IMR-90 (cell line): ENCODE measurements at regions of chr7 and their contacts with region 1.

Region 1: DNA sequence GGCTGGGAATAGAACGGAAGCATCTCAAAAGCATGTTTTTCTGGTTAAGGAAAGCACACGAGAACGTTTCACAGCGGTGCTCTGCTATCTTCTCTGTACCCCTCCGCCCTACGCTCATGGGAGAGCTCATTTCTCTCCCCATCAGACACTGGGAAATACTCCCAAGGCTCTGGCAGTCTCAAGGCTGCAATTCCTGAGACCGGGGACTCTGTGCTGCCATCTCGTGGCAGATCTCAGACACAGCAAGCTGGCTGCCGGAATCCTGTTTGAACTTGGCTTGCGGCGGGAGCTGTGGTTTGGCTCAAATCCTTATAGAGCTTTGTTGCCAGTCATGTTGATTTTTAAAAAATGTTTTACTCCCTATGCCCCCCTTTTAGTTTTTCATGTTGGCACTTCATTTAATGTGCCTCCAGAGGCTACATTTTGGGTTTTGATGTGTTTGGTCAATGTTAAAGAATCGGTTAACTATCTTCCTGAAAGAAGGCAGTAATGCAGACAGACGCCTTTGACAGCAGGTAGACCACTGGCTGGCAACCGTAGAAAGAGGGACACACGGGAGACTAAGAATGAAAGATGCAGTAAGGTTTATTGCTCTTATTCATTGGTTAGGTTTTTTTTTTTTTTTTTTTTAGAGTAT is 27.6 kb downstream of the BMPER start:
- DNase-seq: peak; percentile 83
- ATAC-seq: peak; percentile 87
- H3K4me3 ChIP-seq: no peak overlapping the region
- H3K27ac ChIP-seq: no peak overlapping the region
- H3K4me1 ChIP-seq: peaks cover 11% of the 10 kb centered on the region
- H3K27me3 ChIP-seq: no peaks in the 10 kb centered on the region
- CTCF ChIP-seq: peak; percentile 93
- POLR2A ChIP-seq: no peak
- RAD21 ChIP-seq: peak; percentile 88

Region 2: DNA sequence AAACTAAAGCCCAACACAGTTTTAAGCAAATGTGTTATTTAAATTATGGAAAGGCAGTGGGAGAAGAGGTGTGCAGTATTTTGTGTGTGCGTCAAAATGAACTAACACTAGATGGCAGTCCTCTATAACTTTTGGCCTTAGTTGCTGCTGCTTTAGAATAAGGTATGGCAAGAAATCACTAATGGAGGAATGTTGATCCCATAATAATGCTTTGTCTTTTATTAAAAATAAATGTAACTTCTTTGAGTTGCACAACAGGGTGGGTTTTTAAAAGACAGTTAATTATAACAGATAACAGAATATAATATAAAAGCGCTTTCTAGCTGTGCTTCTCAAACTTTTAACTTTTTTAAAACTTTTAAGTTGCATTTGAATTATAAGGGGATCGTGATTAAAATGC is 747.2 kb before region 1 on chr7:
- CTCF ChIA-PET with region 1: interaction called, 3 read pairs
- POLR2A ChIA-PET with region 1: no interaction called
- dilution Hi-C with region 1: no loop called
- in situ Hi-C with region 1: no loop called
- intact Hi-C with region 1: loop called (anchors 2 kb)
- DNase-seq: peak; percentile 68
- ATAC-seq: peak; percentile 97
- H3K4me3 ChIP-seq: no peak overlapping the region
- H3K27ac ChIP-seq: no peak overlapping the region
- H3K4me1 ChIP-seq: no peaks in the 10 kb centered on the region
- H3K27me3 ChIP-seq: no peaks in the 10 kb centered on the region
- CTCF ChIP-seq: peak; percentile 80
- POLR2A ChIP-seq: no peak
- RAD21 ChIP-seq: peak; percentile 85

Region 3: DNA sequence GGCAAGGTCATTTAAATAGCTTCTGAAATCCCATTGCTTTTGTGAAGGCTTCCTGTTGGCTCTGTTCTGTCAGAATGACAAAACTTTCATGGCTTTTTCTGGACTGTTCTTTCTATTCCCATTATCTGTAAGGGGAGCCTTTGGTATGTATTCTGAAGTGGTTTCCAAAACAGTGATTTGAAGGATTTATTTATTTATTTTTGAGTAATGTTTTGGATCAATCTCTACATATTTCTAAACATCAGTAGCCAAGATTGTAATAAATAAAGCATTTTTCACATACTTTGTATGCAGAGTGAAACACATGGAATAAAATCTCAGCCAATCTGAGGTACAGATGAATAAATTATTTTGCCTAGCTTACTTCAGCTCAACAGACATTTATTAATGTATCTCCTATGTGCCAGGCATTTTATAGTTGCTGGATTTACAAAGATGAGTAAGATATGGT is 682.5 kb before region 1 on chr7:
- CTCF ChIA-PET with region 1: interaction called, 4 read pairs
- POLR2A ChIA-PET with region 1: no interaction called
- dilution Hi-C with region 1: no loop called
- in situ Hi-C with region 1: loop called (anchors 10 kb)
- intact Hi-C with region 1: no loop called
- DNase-seq: peak; percentile 75
- ATAC-seq: peak; percentile 81
- H3K4me3 ChIP-seq: no peak overlapping the region
- H3K27ac ChIP-seq: no peak overlapping the region
- H3K4me1 ChIP-seq: peaks cover 3% of the 10 kb centered on the region; the same call in 1 of the 2 replicates
- H3K27me3 ChIP-seq: no peaks in the 10 kb centered on the region
- CTCF ChIP-seq: no peak
- POLR2A ChIP-seq: no peak
- RAD21 ChIP-seq: no peak

Region 4: GRCh38 chr7:33459340-33459751 is 473.6 kb before region 1 on chr7:
- CTCF ChIA-PET with region 1: interaction called, 3 read pairs
- POLR2A ChIA-PET with region 1: no interaction called
- dilution Hi-C with region 1: no loop called
- in situ Hi-C with region 1: no loop called
- intact Hi-C with region 1: loop called (anchors 1 kb)
- DNase-seq: peak; percentile 66
- ATAC-seq: peak; percentile 99
- H3K4me3 ChIP-seq: no peak overlapping the region
- H3K27ac ChIP-seq: no peak overlapping the region
- H3K4me1 ChIP-seq: no peaks in the 10 kb centered on the region
- H3K27me3 ChIP-seq: no peaks in the 10 kb centered on the region
- CTCF ChIP-seq: peak; percentile 54
- POLR2A ChIP-seq: no peak
- RAD21 ChIP-seq: peak; percentile 64

Region 5: DNA sequence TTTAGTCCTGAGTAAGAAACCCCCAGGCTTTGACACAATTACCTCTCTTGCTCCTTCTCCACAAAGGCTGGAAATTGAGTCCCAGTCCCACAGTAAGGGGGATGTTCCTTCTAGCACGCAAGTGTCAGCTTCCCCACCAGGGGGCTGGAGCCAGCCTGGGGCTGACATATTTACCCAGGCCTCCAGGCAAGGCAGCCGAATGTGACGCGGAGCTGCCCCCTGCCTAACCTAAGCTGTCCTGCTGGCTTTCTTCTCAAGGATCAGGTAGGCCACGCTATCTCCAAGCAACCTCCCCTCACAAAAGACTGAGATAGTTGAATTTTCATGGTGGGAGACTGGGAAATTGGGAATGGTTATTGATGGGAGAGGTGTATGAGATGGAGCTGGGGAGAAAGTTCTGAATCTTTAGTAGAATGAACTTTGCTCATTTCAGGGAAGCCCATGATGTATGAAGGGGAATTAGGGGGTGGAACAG is 46.8 kb before region 1 on chr7:
- CTCF ChIA-PET with region 1: no interaction called
- POLR2A ChIA-PET with region 1: no interaction called
- dilution Hi-C with region 1: no loop called
- in situ Hi-C with region 1: no loop called
- intact Hi-C with region 1: no loop called
- DNase-seq: peak; percentile 35
- ATAC-seq: peak; percentile 53
- H3K4me3 ChIP-seq: no peak overlapping the region
- H3K27ac ChIP-seq: peak overlapping the region; percentile 30; the same call in 1 of the 2 replicates
- H3K4me1 ChIP-seq: peaks cover 11% of the 10 kb centered on the region
- H3K27me3 ChIP-seq: peaks cover 8% of the 10 kb centered on the region
- CTCF ChIP-seq: peak; percentile 52
- POLR2A ChIP-seq: no peak
- RAD21 ChIP-seq: peak; percentile 50

Region 6: GRCh38 chr7:33921216-33921938 is 11.6 kb before region 1 on chr7:
- CTCF ChIA-PET with region 1: interaction called, 20 read pairs
- POLR2A ChIA-PET with region 1: no interaction called
- dilution Hi-C with region 1: no loop called
- in situ Hi-C with region 1: no loop called
- intact Hi-C with region 1: no loop called
- DNase-seq: peak; percentile 79
- ATAC-seq: peak; percentile 44
- H3K4me3 ChIP-seq: no peak overlapping the region
- H3K27ac ChIP-seq: no peak overlapping the region
- H3K4me1 ChIP-seq: peaks cover 3% of the 10 kb centered on the region
- H3K27me3 ChIP-seq: no peaks in the 10 kb centered on the region
- CTCF ChIP-seq: no peak
- POLR2A ChIP-seq: no peak
- RAD21 ChIP-seq: no peak

Region 7: DNA sequence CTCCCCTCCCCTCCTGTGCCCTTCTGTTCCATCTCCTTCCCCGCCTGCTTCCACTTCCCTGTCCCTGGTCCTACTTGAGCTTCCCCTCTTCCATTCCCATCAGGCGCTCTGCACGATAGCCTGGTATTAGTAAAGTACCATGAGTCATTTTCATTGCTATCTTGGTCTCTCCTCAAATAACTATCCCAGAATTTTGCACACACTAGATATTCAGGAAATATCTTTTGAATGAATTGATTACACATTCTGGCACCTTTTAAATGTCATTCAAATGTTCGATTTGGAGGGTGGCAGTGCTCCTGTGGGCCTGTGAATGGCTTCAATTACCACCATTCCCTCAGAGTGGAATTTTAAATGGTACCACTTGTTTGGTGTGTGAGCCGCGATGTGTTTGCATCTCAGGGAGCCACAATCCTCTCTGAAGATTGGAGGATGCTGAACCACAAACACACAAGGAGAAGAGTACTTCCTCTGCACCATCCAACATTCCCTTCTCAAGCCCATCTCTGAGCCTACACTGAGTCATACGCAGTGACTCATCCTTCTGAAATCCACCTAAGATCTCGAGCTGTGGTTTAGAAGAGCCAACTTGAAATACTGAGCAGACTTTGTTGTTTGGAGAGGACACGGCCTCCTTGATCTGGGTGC is 54.1 kb after region 1 on chr7:
- CTCF ChIA-PET with region 1: interaction called, 11 read pairs
- POLR2A ChIA-PET with region 1: no interaction called
- dilution Hi-C with region 1: no loop called
- in situ Hi-C with region 1: no loop called
- intact Hi-C with region 1: no loop called
- DNase-seq: peak; percentile 100
- ATAC-seq: peak; percentile 94
- H3K4me3 ChIP-seq: no peak overlapping the region
- H3K27ac ChIP-seq: peak overlapping the region; percentile 83
- H3K4me1 ChIP-seq: peaks cover 6% of the 10 kb centered on the region
- H3K27me3 ChIP-seq: no peaks in the 10 kb centered on the region
- CTCF ChIP-seq: no peak
- POLR2A ChIP-seq: no peak
- RAD21 ChIP-seq: peak; percentile 6; the same call in 1 of the 2 replicates